Dendritic cell treated with granulocyte-macrophage colony-stimulating factor and Interleukin-4, amounts not matched to agents 40 ng/mL and 50 ng/mL, for 4 days (primary cell): ENCODE measurements at regions of chr1 and their contacts with region 1.

Region 1: GRCh38 chr1:94734963-94735899 is 84.9 kb upstream of the SLC44A3 start:
- H3K4me3 Mint-ChIP-seq: no peak overlapping the region
- H3K27ac Mint-ChIP-seq: peak overlapping the region; percentile 72
- H3K4me1 Mint-ChIP-seq: peaks cover 49% of the 10 kb centered on the region
- H3K27me3 Mint-ChIP-seq: no peaks in the 10 kb centered on the region

Region 2: DNA sequence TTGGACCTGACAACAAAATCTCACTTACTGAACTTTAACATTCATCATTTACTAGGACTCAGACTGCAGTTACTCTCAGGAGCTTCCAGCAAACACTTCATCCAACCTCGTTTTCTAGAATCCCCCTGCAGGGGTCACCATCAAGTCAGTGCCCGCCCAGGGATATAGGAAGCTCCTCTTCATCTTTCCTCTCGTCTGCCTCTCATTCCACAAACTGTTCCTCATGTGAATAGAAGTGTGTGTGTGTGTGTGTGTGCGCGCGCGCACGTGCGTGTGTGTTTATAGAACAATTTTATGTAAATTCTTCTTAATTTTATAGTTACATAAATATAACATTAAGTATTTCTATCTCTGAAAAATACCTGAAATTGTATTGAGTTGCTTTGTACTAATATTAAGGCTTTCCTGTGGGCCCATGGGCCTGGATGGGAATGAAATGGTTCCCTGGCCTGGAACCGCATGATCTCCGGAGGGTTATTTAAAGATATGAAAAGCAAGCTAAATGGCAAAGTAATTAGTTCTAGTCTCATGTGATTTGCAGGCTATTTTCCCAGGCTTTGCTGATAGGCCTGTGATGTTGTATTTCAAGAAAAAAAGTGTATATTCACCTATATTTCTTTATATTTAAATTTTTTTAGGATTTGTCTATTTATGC is 338.7 kb before region 1 on chr1:
- intact Hi-C with region 1: no loop called
- H3K4me3 Mint-ChIP-seq: no peak overlapping the region
- H3K27ac Mint-ChIP-seq: peak overlapping the region; percentile 1
- H3K4me1 Mint-ChIP-seq: peaks cover 16% of the 10 kb centered on the region
- H3K27me3 Mint-ChIP-seq: peaks cover 4% of the 10 kb centered on the region

Region 3: DNA sequence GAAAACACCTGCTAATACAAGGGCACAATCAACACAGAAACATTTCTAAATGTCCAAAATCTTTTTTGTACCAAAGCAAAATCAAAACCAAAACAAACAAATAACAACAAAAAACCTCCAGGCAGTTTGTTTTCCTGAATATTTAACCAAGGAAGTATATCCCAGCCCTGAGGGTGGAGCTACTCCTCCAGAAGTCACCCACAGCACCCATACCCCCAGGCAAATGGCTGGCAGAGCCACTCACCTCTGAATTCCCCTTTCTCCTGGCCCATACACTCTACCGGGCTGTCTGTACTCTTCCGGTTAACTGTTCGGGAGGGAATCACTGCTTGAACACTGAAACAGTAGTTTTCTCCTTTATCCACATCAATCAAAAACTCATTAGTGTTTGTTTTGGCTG is 203.2 kb before region 1 on chr1:
- intact Hi-C with region 1: loop called (anchors 10 kb)
- H3K4me3 Mint-ChIP-seq: no peak overlapping the region
- H3K27ac Mint-ChIP-seq: no peak overlapping the region
- H3K4me1 Mint-ChIP-seq: peaks cover 6% of the 10 kb centered on the region
- H3K27me3 Mint-ChIP-seq: no peaks in the 10 kb centered on the region

Region 4: GRCh38 chr1:94792473-94793295 is 57.5 kb after region 1 on chr1:
- intact Hi-C with region 1: loop called (anchors 10 kb)
- H3K4me3 Mint-ChIP-seq: no peak overlapping the region
- H3K27ac Mint-ChIP-seq: peak overlapping the region; percentile 13
- H3K4me1 Mint-ChIP-seq: peaks cover 34% of the 10 kb centered on the region
- H3K27me3 Mint-ChIP-seq: no peaks in the 10 kb centered on the region

Region 5: DNA sequence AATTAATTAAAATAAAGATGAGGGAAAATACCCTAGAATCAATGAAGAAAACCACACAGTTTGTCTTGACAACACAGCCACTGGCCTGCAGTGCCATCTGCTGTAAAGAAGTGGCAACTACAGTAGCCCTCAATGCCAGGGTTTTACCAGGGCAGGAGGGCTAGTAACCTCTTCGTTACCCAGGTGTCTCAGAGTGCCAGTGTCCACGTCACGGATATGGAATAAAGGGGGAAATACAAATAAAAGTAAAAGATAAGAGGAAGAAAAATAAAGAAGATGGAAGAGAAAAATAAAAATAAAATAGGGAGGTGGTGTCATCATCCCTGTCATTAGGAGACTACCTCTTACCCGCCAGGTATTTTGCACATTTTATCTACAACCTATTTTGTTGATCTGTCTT is 70.7 kb after region 1 on chr1:
- intact Hi-C with region 1: no loop called
- H3K4me3 Mint-ChIP-seq: no peak overlapping the region
- H3K27ac Mint-ChIP-seq: no peak overlapping the region
- H3K4me1 Mint-ChIP-seq: peaks cover 27% of the 10 kb centered on the region
- H3K27me3 Mint-ChIP-seq: no peaks in the 10 kb centered on the region